Endothelial cell of umbilical vein (primary cell): ENCODE measurements at regions of chr6 and their contacts with region 1.

Region 1: DNA sequence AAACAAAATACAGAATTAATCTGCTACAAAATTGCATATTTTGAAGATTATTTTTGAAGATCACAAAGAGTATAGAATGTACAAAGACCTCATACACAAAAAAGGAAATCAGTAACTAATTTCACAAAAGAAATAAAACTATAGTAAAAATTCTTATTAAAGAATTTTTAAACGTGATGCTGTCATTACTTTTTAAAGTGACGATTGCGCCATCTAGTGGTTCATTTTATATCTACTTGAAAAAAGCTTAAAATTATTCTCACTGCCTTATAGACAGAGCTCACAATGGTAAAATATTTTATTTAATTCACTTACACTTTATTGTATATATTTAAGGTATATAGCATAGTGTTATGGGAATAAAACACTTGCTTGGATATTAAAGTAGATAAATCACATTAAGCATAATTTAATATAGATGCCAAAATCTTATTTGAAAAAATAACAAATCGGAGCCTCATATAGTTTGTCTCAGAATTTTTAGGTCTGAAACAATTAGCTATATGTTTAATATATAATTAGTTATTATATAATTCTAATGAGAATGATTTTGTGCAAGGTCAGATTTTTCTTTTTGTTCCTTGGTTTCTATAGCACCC is 128.8 kb downstream of the PHF3 start:
- DNase-seq: peak; percentile 52
- H3K4me3 ChIP-seq: no peak overlapping the region
- H3K27ac ChIP-seq: no peak overlapping the region
- H3K4me1 ChIP-seq: no peaks in the 10 kb centered on the region
- H3K27me3 ChIP-seq: peaks cover 0 to 9% of the 10 kb centered on the region in 2 experiments
- CTCF ChIP-seq: peak in 1 of 2 donors; percentile 19
- POLR2A ChIP-seq: no peak

Region 2: GRCh38 chr6:63347599-63347998 is 416.8 kb before region 1 on chr6:
- CTCF ChIA-PET with region 1: interaction called, 101 read pairs
- POLR2A ChIA-PET with region 1: no interaction called
- dilution Hi-C with region 1: no loop called
- intact Hi-C with region 1: loop called (anchors 1 kb)
- DNase-seq: peak; percentile 68
- H3K4me3 ChIP-seq: no peak overlapping the region
- H3K27ac ChIP-seq: peak overlapping the region; percentile 29
- H3K4me1 ChIP-seq: peaks cover 24% of the 10 kb centered on the region
- H3K27me3 ChIP-seq: no peaks in the 10 kb centered on the region
- CTCF ChIP-seq: no peak
- POLR2A ChIP-seq: no peak

Region 3: GRCh38 chr6:63584125-63584514 is 180.3 kb before region 1 on chr6:
- CTCF ChIA-PET with region 1: interaction called, 10 read pairs
- POLR2A ChIA-PET with region 1: no interaction called
- dilution Hi-C with region 1: no loop called
- intact Hi-C with region 1: no loop called
- DNase-seq: no peak
- H3K4me3 ChIP-seq: no peak overlapping the region
- H3K27ac ChIP-seq: no peak overlapping the region
- H3K4me1 ChIP-seq: no peaks in the 10 kb centered on the region
- H3K27me3 ChIP-seq: no peaks in the 10 kb centered on the region
- CTCF ChIP-seq: no peak
- POLR2A ChIP-seq: peak; percentile 38

Region 4: GRCh38 chr6:63689421-63689820 is 75.0 kb before region 1 on chr6:
- CTCF ChIA-PET with region 1: interaction called, 20 read pairs
- POLR2A ChIA-PET with region 1: no interaction called
- dilution Hi-C with region 1: no loop called
- intact Hi-C with region 1: no loop called
- DNase-seq: peak; percentile 5
- H3K4me3 ChIP-seq: no peak overlapping the region
- H3K27ac ChIP-seq: no peak overlapping the region
- H3K4me1 ChIP-seq: no peaks in the 10 kb centered on the region
- H3K27me3 ChIP-seq: no peaks in the 10 kb centered on the region
- CTCF ChIP-seq: no peak
- POLR2A ChIP-seq: no peak

Region 5: GRCh38 chr6:63774961-63775360 is 10.5 kb after region 1 on chr6:
- CTCF ChIA-PET with region 1: interaction called, 23 read pairs
- POLR2A ChIA-PET with region 1: no interaction called
- dilution Hi-C with region 1: no loop called
- intact Hi-C with region 1: no loop called
- DNase-seq: no peak
- H3K4me3 ChIP-seq: no peak overlapping the region
- H3K27ac ChIP-seq: no peak overlapping the region
- H3K4me1 ChIP-seq: no peaks in the 10 kb centered on the region
- H3K27me3 ChIP-seq: peaks cover 5 to 18% of the 10 kb centered on the region in 2 experiments
- CTCF ChIP-seq: no peak
- POLR2A ChIP-seq: no peak

Region 6: DNA sequence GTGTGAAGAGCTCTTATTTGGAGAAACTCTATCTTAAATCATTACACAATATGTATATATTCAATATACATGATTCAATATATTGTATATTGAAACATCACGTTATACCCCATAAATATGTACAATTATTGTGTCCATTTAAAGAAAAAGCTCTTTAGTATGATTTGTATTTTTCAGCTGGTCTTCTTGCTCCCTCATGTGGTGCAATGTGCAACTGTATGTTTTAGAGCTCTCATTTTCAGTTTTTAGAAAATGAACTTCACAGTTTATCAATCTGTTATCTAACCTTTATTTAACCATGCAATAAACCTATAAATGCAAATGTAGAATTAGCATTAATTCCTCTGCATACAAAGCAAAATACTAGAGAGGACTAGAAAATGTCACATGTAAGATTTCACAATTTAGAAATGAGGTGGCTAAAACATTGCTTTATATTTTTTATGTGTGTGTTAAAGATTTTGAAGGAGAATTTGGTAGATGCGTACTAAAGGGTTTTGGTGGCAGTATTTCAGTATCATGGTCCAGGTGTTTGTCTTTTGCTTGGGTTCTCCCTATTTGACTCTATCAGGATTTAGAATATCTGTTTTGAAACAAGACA is 38.3 kb after region 1 on chr6:
- CTCF ChIA-PET with region 1: interaction called, 66 read pairs
- POLR2A ChIA-PET with region 1: no interaction called
- dilution Hi-C with region 1: no loop called
- intact Hi-C with region 1: loop called (anchors 2 kb)
- DNase-seq: peak; percentile 47
- H3K4me3 ChIP-seq: no peak overlapping the region
- H3K27ac ChIP-seq: no peak overlapping the region
- H3K4me1 ChIP-seq: peaks cover 40% of the 10 kb centered on the region
- H3K27me3 ChIP-seq: no peaks in the 10 kb centered on the region
- CTCF ChIP-seq: peak; percentile 41 to 42
- POLR2A ChIP-seq: no peak